Right lobe of liver (tissue), 6 donors: ENCODE measurements at regions of chr4 and their contacts with region 1.

Region 1: DNA sequence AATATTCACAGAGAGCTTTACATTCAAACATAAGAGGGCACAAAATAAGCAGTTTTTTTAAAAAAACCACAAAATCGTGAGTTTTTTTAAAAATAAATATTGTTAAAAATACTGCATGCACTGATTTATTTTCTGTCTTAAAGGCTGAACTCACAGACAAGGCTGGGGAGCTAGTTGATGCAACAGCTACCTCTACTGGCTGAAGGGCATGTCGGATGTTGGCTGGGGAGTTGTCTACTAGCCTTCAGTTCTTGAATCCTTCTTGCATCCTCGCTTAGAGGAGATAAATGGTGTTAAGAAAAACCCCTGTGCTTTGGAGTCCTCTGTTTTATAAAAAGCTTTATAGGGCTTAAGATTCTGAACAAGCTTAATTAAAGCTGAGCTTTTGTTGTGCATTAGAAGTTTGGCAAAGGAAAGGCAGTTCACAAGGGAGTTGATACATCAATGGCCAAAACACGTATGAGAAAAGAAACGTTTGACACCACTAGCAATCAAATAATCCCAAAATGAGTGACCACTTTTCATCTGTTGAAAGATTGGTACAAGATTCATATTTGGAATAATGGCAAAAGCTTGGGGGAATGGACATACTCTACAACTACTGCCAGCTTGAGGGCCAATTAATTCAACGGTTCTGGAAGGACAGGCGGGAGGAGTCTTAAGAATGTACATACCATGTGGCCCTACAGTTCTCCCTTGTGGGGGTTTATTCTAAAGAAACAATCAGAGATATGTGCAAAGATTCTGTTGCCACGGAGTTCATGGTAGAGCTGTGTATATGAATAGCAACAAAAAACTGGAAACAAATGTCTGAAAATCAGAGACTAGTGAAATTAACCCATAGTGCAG is 94.7 kb downstream of the SEL1L3 start:
- DNase-seq: peak in 2 of 3 donors; percentile 34 to 66
- ATAC-seq: peak; percentile 89 to 97 (median 94)
- H3K4me3 ChIP-seq: no peak overlapping the region
- H3K27ac ChIP-seq: no peak overlapping the region
- H3K4me1 ChIP-seq: no peaks in the 10 kb centered on the region
- H3K27me3 ChIP-seq: no peaks in the 10 kb centered on the region
- CTCF ChIP-seq: peak; percentile 70 to 86 (median 80)
- POLR2A ChIP-seq: no peak

Region 2: GRCh38 chr4:25439918-25440477 is 328.1 kb before region 1 on chr4:
- intact Hi-C with region 1: loop called (anchors 10 kb)
- DNase-seq: peak in 1 of 3 donors; percentile 66
- ATAC-seq: peak; percentile 87 to 92 (median 89)
- H3K4me3 ChIP-seq: no peak overlapping the region
- H3K27ac ChIP-seq: no peak overlapping the region
- H3K4me1 ChIP-seq: peaks cover 0 to 7% (median 0%) of the 10 kb centered on the region in 4 donors
- H3K27me3 ChIP-seq: no peaks in the 10 kb centered on the region
- CTCF ChIP-seq: peak; percentile 80 to 96 (median 94)
- POLR2A ChIP-seq: no peak

Region 3: GRCh38 chr4:25875281-25875745 is 107.2 kb after region 1 on chr4:
- intact Hi-C with region 1: no loop called
- DNase-seq: no peak
- ATAC-seq: no peak
- H3K4me3 ChIP-seq: no peak overlapping the region
- H3K27ac ChIP-seq: no peak overlapping the region
- H3K4me1 ChIP-seq: no peaks in the 10 kb centered on the region
- H3K27me3 ChIP-seq: no peaks in the 10 kb centered on the region
- CTCF ChIP-seq: no peak
- POLR2A ChIP-seq: no peak